PC-3 (cell line): ENCODE measurements at regions of chr11 and their contacts with region 1.

Region 1: GRCh38 chr11:106939157-106939556 is 79.1 kb downstream of the GUCY1A2 start:
- DNase-seq: no peak
- ATAC-seq: no peak
- H3K4me3 ChIP-seq: no peak overlapping the region
- H3K27ac ChIP-seq: no peak overlapping the region
- H3K4me1 ChIP-seq: no peaks in the 10 kb centered on the region
- H3K27me3 ChIP-seq: peaks cover 43% of the 10 kb centered on the region
- CTCF ChIP-seq: no peak

Region 2: DNA sequence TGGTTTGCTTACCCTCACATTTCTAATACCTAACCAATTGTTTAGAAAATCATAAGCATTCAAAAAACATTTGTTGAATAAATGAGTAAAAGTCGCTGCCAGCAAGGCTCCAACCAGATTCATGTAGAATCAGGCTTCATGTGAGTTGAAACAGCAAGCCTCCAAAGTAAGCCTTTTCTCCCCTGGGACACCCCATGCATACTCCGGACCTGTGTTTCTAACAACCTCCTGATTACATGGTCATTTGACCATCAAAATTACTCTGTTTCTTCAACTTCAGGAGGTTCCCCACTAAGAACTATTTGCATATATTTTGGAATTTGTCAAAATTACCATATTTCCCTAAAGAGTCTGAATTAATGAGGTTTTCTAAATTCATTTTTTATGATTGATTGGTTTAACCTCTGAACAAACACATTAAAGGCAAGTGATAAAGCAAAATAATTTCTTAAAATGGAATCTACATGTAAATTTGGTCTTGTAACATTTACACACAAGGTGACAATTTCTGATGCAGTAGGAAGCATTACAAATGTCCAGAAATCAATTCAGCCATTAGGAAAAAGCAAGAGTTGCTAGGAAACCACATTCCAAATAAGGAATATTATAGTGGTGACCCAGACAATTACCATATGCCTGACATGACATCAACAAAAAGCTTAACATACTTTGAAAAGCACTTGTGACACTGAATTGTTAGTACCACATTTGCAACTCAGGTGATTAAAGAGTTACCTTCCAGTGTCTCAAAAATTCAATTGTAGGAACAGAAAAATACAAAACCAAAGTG is 173.5 kb before region 1 on chr11:
- CTCF ChIA-PET with region 1: no interaction called
- POLR2A ChIA-PET with region 1: no interaction called
- intact Hi-C with region 1: no loop called
- DNase-seq: no peak
- ATAC-seq: no peak
- H3K4me3 ChIP-seq: no peak overlapping the region
- H3K27ac ChIP-seq: no peak overlapping the region
- H3K4me1 ChIP-seq: no peaks in the 10 kb centered on the region
- H3K27me3 ChIP-seq: peaks cover 43% of the 10 kb centered on the region
- CTCF ChIP-seq: no peak

Region 3: GRCh38 chr11:106917973-106918372 is 21.2 kb before region 1 on chr11:
- CTCF ChIA-PET with region 1: no interaction called
- POLR2A ChIA-PET with region 1: no interaction called
- intact Hi-C with region 1: loop called (anchors 2 kb)
- DNase-seq: peak; percentile 65
- ATAC-seq: no peak
- H3K4me3 ChIP-seq: no peak overlapping the region
- H3K27ac ChIP-seq: no peak overlapping the region
- H3K4me1 ChIP-seq: no peaks in the 10 kb centered on the region
- H3K27me3 ChIP-seq: no peaks in the 10 kb centered on the region
- CTCF ChIP-seq: peak; percentile 71